ENCODE measurements at regions of chr9 and their contacts with region 1.

Region 1: GRCh38 chr9:33816327-33817252 is at the start of gene UBE2R2:
- DNase-seq: peak; percentile 95
- ATAC-seq: peak; percentile 72 to 83
- H3K4me3 ChIP-seq: peak within 1 kb of the TSS; percentile 81
- H3K27ac ChIP-seq: peak within 1 kb of the TSS; percentile 99
- H3K4me1 ChIP-seq: peaks cover 55% of the 10 kb centered on the region
- CTCF ChIP-seq: no peak
- EP300 ChIP-seq: peak in 1 of 2 experiments; percentile 12; a peak in 1 of 5 replicates
- POLR2A ChIP-seq: peak; percentile 53
- RAD21 ChIP-seq: peak in 1 of 2 experiments; percentile 32; a peak in 1 of 5 replicates
- polyA plus RNA-seq, gene UBE2R2: 44.9 and 48.1 TPM in 2 replicates

Region 2: DNA sequence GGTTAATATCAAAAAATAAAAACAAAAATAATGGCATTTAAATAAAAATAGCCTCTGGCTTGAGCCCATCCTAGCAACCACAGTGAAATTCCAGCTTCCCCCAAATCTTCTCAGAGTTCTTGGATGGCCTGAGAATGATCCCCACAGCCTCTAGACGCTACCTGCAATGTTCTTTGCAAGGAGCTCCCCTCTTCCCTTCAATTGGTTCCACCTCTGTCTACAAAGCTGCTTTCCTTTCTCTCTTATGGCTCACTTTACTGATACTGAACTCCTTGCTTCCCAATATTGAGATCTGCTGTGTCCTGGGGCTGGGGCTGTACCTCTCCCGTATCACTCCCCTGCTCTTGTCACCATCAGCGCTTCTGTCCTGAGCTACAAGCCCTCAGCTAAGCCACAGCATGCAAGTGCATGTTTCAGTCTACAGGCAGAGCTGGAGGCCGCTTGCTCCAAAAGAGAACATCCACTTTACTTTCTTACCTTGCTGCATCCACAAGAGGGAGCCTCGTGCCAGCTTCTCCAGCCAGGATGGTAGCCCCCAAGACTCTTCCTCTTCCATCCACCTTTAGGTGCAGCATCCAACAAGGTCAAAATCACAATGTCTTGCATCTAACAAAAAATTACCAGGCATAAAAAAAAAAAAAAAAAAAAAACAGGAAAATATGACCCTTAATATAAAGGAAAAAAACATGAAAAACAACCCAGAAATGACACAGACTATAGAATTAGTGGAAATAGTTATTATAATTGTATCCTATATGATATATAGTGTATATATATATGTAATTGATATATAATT is 78.6 kb before region 1 on chr9:
- CTCF ChIA-PET with region 1: interaction called, 19 read pairs
- POLR2A ChIA-PET with region 1: no interaction called
- DNase-seq: peak; percentile 47 to 81
- ATAC-seq: peak; percentile 95 to 99
- H3K4me3 ChIP-seq: no peak overlapping the region
- H3K27ac ChIP-seq: peak overlapping the region in 1 of 2 experiments; percentile 38; a peak in 2 of 6 replicates
- H3K4me1 ChIP-seq: 0 out of 3 replicates have a peak, but pooled peaks cover 5% of the 10 kb centered on the region
- CTCF ChIP-seq: peak; percentile 88
- EP300 ChIP-seq: no peak
- POLR2A ChIP-seq: no peak
- RAD21 ChIP-seq: peak; percentile 85 to 89

Region 3: GRCh38 chr9:33791117-33791516 is 25.5 kb before region 1 on chr9:
- CTCF ChIA-PET with region 1: interaction called, 17 read pairs
- POLR2A ChIA-PET with region 1: no interaction called
- DNase-seq: peak in 1 of 2 experiments; percentile 68
- ATAC-seq: peak in 1 of 2 experiments; percentile 63; a peak in 3 of 6 replicates
- H3K4me3 ChIP-seq: no peak overlapping the region
- H3K27ac ChIP-seq: 0 out of 6 replicates have a peak overlapping the region, but pooled peaks of 1 of the 2 experiments have one; percentile 36
- H3K4me1 ChIP-seq: peaks cover 15% of the 10 kb centered on the region
- CTCF ChIP-seq: no peak
- EP300 ChIP-seq: no peak
- POLR2A ChIP-seq: no peak
- RAD21 ChIP-seq: no peak

Region 4: GRCh38 chr9:33800886-33801285 is 15.7 kb before region 1 on chr9:
- CTCF ChIA-PET with region 1: interaction called, 17 read pairs
- POLR2A ChIA-PET with region 1: interaction called, 4 read pairs
- DNase-seq: no peak
- ATAC-seq: no peak
- H3K4me3 ChIP-seq: no peak overlapping the region
- H3K27ac ChIP-seq: no peak overlapping the region
- H3K4me1 ChIP-seq: no peaks in the 10 kb centered on the region
- CTCF ChIP-seq: no peak
- EP300 ChIP-seq: no peak
- POLR2A ChIP-seq: no peak
- RAD21 ChIP-seq: no peak

Region 5: DNA sequence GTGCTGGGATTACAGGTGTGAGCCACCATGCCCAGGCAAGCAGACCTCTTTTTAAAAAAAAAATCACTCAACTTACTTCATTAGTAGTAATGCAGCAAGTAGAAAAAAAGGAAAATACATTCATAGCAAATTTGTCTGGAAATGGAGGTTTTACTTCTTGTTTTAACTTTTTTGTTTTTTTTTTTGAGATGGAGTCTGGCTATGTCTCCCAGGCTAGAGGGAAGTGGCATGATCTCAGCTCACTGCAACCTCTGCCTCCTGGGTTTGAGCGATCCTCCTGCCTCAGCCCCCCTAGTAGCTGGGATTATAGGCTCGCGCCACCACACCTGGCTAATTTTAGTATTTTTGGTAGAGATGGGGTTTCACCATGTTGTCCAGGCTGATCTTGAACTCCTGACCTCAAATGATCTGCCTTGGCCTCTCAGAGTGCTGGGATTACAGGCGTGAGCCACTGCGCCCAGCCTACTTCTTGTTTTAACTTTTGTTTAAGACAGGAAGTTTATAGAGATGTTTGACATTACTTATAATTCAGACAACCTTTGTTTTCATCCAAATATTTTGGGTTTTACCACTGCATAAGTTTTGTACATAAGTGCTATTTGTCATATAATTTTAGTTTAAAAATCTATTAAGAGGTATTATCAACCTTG is 26.8 kb after region 1 on chr9:
- CTCF ChIA-PET with region 1: interaction called, 90 read pairs
- POLR2A ChIA-PET with region 1: interaction called, 3 read pairs
- DNase-seq: no peak
- ATAC-seq: no peak
- H3K4me3 ChIP-seq: no peak overlapping the region
- H3K27ac ChIP-seq: no peak overlapping the region
- H3K4me1 ChIP-seq: peaks cover 25% of the 10 kb centered on the region
- CTCF ChIP-seq: no peak
- EP300 ChIP-seq: no peak
- POLR2A ChIP-seq: no peak
- RAD21 ChIP-seq: no peak

Region 6: GRCh38 chr9:33852216-33852826 is 35.7 kb after region 1 on chr9:
- CTCF ChIA-PET with region 1: interaction called, 90 read pairs
- POLR2A ChIA-PET with region 1: interaction called, 4 read pairs
- DNase-seq: peak; percentile 47 to 75
- ATAC-seq: peak; percentile 81 to 90
- H3K4me3 ChIP-seq: no peak overlapping the region
- H3K27ac ChIP-seq: peak overlapping the region in 1 of 2 experiments; percentile 59; a peak in 1 of 6 replicates
- H3K4me1 ChIP-seq: peaks cover 66% of the 10 kb centered on the region
- CTCF ChIP-seq: peak; percentile 83
- EP300 ChIP-seq: no peak
- POLR2A ChIP-seq: no peak
- RAD21 ChIP-seq: peak; percentile 85 to 87

Region 7: GRCh38 chr9:33880211-33881089 is 63.9 kb after region 1 on chr9:
- CTCF ChIA-PET with region 1: interaction called, 10 read pairs
- POLR2A ChIA-PET with region 1: no interaction called
- DNase-seq: no peak
- ATAC-seq: 0 out of 6 replicates have a peak, but pooled peaks of 1 of the 2 experiments have one; percentile 34
- H3K4me3 ChIP-seq: no peak overlapping the region
- H3K27ac ChIP-seq: no peak overlapping the region
- H3K4me1 ChIP-seq: peaks cover 32% of the 10 kb centered on the region
- CTCF ChIP-seq: no peak
- EP300 ChIP-seq: no peak
- POLR2A ChIP-seq: no peak
- RAD21 ChIP-seq: no peak